ENCODE measurements at regions of chr16 and their contacts with region 1.

Region 1: GRCh38 chr16:78778101-78779004 is 678.9 kb downstream of the WWOX start:
- DNase-seq: peak; percentile 90
- H3K4me3 Mint-ChIP-seq: peak overlapping the region; percentile 62
- H3K27ac Mint-ChIP-seq: peak overlapping the region; percentile 96
- H3K4me1 Mint-ChIP-seq: peaks cover 94% of the 10 kb centered on the region
- H3K27me3 Mint-ChIP-seq: no peaks in the 10 kb centered on the region

Region 2: GRCh38 chr16:78705694-78706093 is 72.7 kb before region 1 on chr16:
- CTCF ChIA-PET with region 1: interaction called, 53 read pairs
- POLR2A ChIA-PET with region 1: interaction called, 18 read pairs
- intact Hi-C with region 1: loop called (anchors 1 kb)
- DNase-seq: peak; percentile 51
- H3K4me3 Mint-ChIP-seq: no peak overlapping the region
- H3K27ac Mint-ChIP-seq: peak overlapping the region; percentile 87
- H3K4me1 Mint-ChIP-seq: peaks cover 16% of the 10 kb centered on the region
- H3K27me3 Mint-ChIP-seq: no peaks in the 10 kb centered on the region

Region 3: GRCh38 chr16:78754713-78755112 is 23.6 kb before region 1 on chr16:
- CTCF ChIA-PET with region 1: no interaction called
- POLR2A ChIA-PET with region 1: no interaction called
- intact Hi-C with region 1: no loop called
- DNase-seq: no peak
- H3K4me3 Mint-ChIP-seq: no peak overlapping the region
- H3K27ac Mint-ChIP-seq: no peak overlapping the region
- H3K4me1 Mint-ChIP-seq: peaks cover 5% of the 10 kb centered on the region
- H3K27me3 Mint-ChIP-seq: no peaks in the 10 kb centered on the region

Region 4: DNA sequence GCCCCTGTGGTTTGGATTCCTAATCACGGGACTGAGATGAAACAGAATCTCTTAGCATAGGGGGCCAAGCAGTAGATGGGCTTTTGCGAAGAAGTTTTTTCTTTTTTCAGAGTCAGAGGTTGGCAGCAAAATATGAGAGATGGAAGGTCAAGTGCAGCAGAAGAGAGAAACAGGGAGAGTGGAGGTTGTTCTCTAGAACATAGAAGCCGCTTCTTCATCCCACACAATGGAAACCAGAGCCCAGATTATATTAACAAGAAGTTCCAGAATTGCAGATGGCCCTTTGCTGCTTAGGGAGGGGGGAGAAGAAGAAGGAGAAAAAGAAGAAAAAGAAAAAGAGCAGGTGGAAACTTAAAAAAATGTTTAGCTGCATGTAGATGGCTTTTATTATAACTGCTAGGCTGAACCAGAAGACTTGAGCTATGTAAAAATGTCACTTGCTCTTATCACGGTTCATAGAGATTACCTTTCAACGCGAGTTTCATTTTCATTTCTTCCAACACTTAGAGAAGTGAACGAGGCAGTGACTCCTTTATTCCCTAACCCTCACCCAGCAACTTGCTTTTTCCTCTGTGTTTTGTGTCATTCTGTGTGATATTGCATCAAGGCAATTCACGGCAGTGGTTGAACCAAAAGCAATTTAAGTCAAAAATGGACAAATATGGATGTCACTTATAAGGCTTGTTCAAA is 58.6 kb after region 1 on chr16:
- CTCF ChIA-PET with region 1: no interaction called
- POLR2A ChIA-PET with region 1: interaction called, 8 read pairs
- intact Hi-C with region 1: loop called (anchors 1 kb)
- DNase-seq: peak; percentile 31
- H3K4me3 Mint-ChIP-seq: peak overlapping the region; percentile 51
- H3K27ac Mint-ChIP-seq: peak overlapping the region; percentile 93
- H3K4me1 Mint-ChIP-seq: peaks cover 37% of the 10 kb centered on the region
- H3K27me3 Mint-ChIP-seq: no peaks in the 10 kb centered on the region

Region 5: DNA sequence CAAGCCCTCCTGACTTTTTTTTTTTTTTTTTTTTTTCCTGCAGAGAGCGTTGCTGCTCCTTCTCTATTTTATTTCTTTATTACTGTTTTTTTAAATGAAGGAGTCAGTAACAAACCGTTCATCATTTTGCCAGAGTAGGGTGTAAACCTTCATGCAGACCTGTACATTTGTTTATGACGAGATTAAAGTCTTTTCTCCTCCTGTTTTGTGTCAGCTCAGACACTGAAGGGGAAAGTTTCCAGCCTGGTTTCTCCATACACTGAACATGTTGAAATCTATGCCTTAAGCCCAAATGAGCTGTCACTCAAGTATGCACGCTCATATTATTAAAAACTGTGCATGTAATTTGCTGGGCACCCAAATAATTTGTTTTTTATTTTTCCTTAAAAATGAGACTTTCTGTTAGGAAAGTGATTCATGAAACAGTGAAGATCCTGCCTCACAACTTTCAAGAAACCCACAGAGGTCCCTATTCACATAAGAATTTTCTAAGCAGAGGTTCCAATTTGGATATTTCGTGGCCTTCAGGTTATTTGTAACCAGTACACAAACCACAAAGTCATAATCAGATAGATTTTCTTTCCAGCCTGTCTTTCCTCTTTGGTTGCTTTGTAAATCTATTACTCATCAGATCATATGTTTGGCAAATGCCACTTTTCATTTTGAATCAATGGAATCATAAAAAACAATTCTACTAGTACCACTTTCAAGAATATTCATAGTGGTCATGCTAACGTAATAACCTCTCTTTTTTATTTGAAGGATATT is 121.9 kb after region 1 on chr16:
- CTCF ChIA-PET with region 1: interaction called, 15 read pairs
- POLR2A ChIA-PET with region 1: interaction called, 232 read pairs
- intact Hi-C with region 1: loop called (anchors 1 kb)
- DNase-seq: no peak
- H3K4me3 Mint-ChIP-seq: peak overlapping the region; percentile 20
- H3K27ac Mint-ChIP-seq: peak overlapping the region; percentile 96
- H3K4me1 Mint-ChIP-seq: peaks cover 76% of the 10 kb centered on the region
- H3K27me3 Mint-ChIP-seq: no peaks in the 10 kb centered on the region

Region 6: DNA sequence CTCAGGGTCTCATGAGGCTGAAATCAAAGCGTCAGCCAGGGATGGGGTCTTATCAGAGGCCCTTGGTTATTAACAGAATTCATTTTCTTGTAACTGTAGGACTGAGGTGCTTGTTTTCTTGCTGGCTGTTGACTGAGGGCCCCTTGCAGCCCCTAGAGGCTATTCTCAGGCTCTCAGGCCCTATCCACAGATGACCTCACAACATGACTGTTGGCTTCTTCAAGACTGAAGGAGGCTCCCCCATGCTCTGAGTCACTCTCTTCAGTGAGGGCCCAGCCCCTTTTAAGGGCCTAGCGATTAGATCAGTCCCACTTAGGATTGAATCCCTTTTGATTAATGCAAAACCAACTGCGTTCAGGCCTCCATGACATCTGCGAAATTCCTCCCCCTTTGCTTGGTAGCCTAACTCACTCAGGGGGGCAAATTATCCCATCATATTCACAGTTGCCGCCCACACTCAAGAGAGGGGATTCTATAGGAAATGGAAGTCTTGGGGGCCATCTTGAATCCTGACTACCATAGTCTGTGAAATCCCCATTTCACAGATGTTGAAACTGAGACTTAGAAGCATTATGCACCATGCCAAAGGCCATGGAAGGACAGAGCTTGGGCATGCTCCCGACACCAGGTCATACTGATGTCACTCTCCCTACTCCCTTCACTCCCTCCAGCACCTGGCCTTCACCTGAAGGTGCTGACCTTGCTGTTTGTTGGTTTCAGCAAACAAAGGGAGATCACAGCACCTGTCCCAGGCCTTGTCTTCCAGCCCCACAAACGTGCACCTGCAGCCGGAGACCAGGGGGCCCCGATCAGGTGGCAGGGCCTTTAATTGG is 229.9 kb after region 1 on chr16:
- CTCF ChIA-PET with region 1: no interaction called
- POLR2A ChIA-PET with region 1: interaction called, 5 read pairs
- intact Hi-C with region 1: loop called (anchors 1 kb)
- DNase-seq: peak; percentile 60
- H3K4me3 Mint-ChIP-seq: no peak overlapping the region
- H3K27ac Mint-ChIP-seq: peak overlapping the region; percentile 90
- H3K4me1 Mint-ChIP-seq: peaks cover 45% of the 10 kb centered on the region
- H3K27me3 Mint-ChIP-seq: no peaks in the 10 kb centered on the region

Region 7: DNA sequence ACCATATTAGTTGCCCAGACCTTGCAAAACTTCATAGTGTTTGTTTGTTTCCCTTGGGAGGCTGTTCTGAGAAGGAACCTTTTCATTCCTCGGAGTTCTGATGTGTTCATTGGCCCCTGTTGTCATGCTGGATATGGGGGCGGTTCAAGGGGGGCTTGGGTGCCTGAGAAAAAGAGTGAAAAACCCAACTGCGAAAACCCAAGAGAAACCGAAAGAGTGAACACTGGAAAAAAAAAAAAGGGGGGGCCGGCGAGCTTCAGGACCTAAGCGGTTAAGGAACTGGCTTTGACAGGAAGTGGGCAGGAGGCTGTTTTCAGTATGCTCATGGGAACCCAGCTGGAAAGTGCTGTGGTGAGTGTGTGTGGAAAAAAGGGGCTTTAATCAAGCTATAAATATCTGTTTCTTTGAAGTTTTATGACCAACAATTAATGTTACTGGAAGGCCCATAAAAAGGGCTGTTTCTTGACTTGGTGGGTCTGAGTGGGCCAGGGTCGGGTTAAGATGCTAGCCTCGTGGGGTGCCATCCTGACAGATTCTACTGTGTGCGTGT is 311.5 kb after region 1 on chr16:
- CTCF ChIA-PET with region 1: interaction called, 3 read pairs
- POLR2A ChIA-PET with region 1: interaction called, 8 read pairs
- intact Hi-C with region 1: loop called (anchors 5 kb)
- DNase-seq: peak; percentile 85
- H3K4me3 Mint-ChIP-seq: peak overlapping the region; percentile 45
- H3K27ac Mint-ChIP-seq: peak overlapping the region; percentile 86
- H3K4me1 Mint-ChIP-seq: peaks cover 59% of the 10 kb centered on the region
- H3K27me3 Mint-ChIP-seq: no peaks in the 10 kb centered on the region

Region 8: DNA sequence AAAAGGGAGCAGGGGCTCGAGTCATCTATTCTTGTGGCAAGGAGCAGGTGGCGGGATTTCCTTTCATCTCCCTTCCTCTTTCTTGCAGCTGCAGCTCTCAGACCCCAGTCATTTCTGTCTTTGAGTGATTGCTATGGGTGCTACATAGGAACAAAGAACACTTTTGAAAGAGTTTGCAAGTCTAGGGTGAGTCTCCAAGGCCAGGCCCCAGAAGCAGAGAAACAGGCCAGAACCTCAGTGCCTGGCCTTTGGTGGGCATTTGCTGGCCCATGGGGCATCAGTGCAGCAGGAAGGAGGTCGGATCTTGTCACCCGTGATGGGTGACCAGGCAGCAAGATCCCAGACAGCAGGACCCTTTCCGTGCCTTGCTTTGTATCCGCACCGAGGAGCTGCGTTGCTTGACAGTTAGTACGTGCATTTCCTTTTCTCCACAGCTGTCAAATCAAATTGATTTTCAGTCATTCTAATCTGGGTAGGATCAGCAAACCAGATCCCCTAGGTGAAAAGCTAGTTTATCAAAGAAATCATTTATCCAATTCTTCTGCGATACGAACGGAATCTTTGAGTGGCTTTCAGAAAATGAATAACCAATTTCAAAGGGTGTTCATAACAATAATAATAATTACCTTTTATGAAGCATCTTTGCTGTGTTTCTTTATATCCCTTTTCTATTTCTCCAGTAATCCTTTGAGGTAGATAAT is 1066.8 kb after region 1 on chr16:
- CTCF ChIA-PET with region 1: no interaction called
- POLR2A ChIA-PET with region 1: no interaction called
- intact Hi-C with region 1: loop called (anchors 5 kb)
- DNase-seq: peak; percentile 58
- H3K4me3 Mint-ChIP-seq: peak overlapping the region; percentile 45
- H3K27ac Mint-ChIP-seq: peak overlapping the region; percentile 69
- H3K4me1 Mint-ChIP-seq: peaks cover 40% of the 10 kb centered on the region
- H3K27me3 Mint-ChIP-seq: peaks cover 5% of the 10 kb centered on the region

Measured in activated CD4-positive, alpha-beta memory T cell treated with anti-CD3 and anti-CD28 coated beads for 36 hours (primary cell).